Naive thymus-derived CD8-positive, alpha-beta T cell (primary cell): ENCODE measurements at regions of chr2 and their contacts with region 1.

Region 1: GRCh38 chr2:157468931-157469708 is 25.2 kb upstream of the CYTIP start:
- DNase-seq: peak in 5 of 10 donors; percentile 19 to 81 (median 61)
- ATAC-seq: peak; percentile 77 to 93
- H3K4me3 Mint-ChIP-seq: peak overlapping the region; percentile 49 to 82 (median 70)
- H3K27ac Mint-ChIP-seq: peak overlapping the region; percentile 93 to 99 (median 96)
- H3K4me1 Mint-ChIP-seq: peaks cover 28 to 83% (median 67%) of the 10 kb centered on the region in 4 donors
- H3K27me3 Mint-ChIP-seq: no peaks in the 10 kb centered on the region

Region 2: DNA sequence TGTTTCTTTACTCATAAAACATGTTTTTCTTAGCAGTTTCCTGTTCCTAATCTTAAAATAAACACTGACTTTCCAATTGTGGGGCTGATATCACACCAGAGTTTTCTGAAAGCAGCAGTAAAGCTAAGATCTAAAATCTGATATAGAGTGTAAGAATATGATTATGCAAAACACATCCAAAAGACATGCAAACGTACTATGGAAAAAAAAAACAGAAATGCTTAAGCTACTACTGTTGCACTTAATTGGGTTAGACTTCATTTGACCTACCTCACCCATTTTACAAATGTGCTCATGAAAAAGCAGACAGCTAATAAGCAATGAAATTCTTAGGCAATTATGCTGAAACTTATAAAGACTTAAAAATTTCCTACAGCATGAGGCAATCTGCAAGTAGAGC is 35.7 kb before region 1 on chr2:
- POLR2A ChIA-PET with region 1: interaction called, 16 read pairs
- DNase-seq: no peak
- ATAC-seq: peak; percentile 21 to 40
- H3K4me3 Mint-ChIP-seq: peak overlapping the region; percentile 84 to 99 (median 94)
- H3K27ac Mint-ChIP-seq: peak overlapping the region; percentile 90 to 100 (median 93)
- H3K4me1 Mint-ChIP-seq: peaks cover 53 to 93% (median 82%) of the 10 kb centered on the region in 4 donors
- H3K27me3 Mint-ChIP-seq: no peaks in the 10 kb centered on the region

Region 3: DNA sequence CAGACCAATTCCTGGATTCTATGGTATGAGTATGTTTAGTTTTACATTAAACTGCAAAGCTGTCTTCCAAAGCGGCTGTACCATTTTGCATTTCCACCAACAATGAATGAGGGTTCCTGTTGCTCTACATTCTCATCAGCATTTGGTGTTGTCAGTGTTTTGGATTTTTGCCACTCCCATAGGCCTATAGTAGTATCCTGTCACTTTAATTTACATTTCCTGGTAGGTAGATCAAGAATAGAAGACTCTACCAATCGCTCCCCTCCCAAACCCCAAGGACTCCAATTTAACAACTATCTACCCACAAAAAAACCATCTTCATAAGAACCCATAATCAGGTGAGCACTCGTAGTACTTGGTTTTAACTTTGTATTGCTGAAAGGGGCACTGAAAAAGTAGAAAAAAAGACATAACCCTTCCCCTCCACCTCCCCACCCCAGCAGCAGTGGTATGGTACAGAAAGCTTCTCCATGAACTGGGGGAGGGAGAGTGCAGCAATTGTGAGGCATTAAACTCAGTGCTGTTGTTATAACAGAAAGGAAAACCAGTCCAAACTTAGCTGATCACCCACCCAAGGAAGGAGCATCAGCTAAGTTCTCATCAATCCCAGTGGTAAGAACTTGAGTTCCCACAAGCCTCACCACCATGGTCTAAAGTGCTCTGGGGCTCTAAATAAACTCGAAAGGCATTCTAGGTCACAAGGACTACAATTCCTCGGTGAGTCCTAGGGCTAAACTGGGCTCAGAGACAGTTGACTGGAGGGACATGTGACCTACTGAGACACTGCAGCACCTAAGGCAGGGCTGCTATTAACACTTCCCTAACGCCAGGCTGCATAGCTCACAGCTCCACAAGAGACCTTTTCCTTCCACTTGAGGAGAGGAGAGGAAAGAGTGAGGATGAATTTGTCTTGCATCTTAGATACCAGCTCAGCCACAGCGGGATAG is 10.2 kb after region 1 on chr2:
- POLR2A ChIA-PET with region 1: interaction called, 18 read pairs
- DNase-seq: no peak
- ATAC-seq: peak; percentile 35 to 48
- H3K4me3 Mint-ChIP-seq: peak overlapping the region; percentile 22 to 70 (median 44)
- H3K27ac Mint-ChIP-seq: peak overlapping the region; percentile 16 to 89 (median 72)
- H3K4me1 Mint-ChIP-seq: peaks cover 12 to 42% (median 34%) of the 10 kb centered on the region in 4 donors
- H3K27me3 Mint-ChIP-seq: no peaks in the 10 kb centered on the region

Region 4: GRCh38 chr2:157572725-157573124 is 103.6 kb after region 1 on chr2:
- POLR2A ChIA-PET with region 1: no interaction called
- DNase-seq: peak in 2 of 10 donors; percentile 12 to 13
- ATAC-seq: peak in 1 of 2 donors; percentile 55
- H3K4me3 Mint-ChIP-seq: no peak overlapping the region
- H3K27ac Mint-ChIP-seq: no peak overlapping the region
- H3K4me1 Mint-ChIP-seq: peaks cover 0 to 3% (median under 1%) of the 10 kb centered on the region in 4 donors
- H3K27me3 Mint-ChIP-seq: no peaks in the 10 kb centered on the region